GM10248 (cell line): ENCODE measurements at regions of chr1 and their contacts with region 1.

Region 1: DNA sequence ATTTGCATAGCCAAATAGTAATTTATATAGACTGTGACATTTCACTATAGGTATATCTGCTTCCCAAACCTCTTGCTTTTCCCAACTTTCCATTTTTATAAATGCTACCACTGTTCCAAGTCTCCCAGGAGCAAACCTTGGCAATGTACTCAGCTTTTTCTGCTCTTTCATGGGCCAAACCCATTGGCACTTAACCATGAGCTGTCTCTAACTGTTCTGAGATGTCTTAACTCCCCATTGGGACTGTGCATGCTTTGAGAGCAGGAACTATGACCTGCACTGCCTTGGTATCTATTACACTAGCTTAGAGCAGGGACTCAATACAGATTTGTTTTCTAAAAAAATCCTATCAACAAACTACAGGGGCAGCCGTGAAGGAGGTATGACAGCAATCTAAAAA is 22.5 kb upstream of the KHDRBS1 start:
- DNase-seq: no peak
- CTCF ChIP-seq: no peak

Region 2: GRCh38 chr1:31977385-31978131 is 13.6 kb before region 1 on chr1:
- CTCF ChIA-PET with region 1: interaction called, 12 read pairs
- POLR2A ChIA-PET with region 1: no interaction called
- DNase-seq: peak; percentile 45
- CTCF ChIP-seq: peak; percentile 26